ENCODE measurements at regions of chr4 and their contacts with region 1.

Region 1: DNA sequence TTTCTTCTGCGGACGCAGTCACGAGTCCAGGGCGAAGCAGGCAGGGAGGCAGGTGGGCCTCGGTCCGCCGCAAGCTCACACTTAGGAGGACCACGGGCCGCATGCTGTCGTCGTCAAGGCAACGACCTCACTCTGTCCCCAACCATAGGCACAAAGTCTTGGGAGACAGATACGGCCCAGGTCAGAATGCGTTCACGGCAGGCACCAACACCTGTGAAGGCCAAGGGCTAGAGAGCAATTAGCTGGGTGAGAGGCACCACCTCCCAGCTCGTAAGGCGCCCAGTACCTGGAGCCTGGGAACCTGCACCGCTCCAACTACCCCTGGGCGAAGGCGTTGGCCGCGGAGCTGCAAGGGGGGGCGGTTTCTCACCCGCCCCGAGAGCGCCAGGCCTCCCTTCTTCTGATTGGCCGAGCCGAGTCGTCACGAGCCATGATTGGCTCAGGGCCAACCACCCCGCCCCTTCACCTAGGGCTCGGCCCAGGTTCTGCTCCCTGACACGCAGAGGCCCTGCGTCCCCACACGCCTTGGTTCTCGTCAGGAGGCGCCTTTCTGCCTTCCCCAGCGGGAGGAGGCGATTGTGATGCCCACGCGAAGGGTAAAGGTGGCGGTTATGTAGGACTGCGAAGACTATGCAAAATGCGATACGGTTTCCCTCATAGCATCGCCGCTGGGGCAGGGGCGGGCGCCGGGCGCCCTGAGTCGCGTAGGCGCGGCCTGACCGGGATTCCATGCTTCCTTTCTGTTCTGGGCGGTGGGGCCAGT is at the start of gene CDKL2:
- DNase-seq: peak; percentile 93
- ATAC-seq: peak; percentile 100
- H3K4me3 ChIP-seq: peak within 1 kb of the TSS; percentile 45 to 84 (median 68)
- H3K4me3 Mint-ChIP-seq: peak within 1 kb of the TSS; percentile 95
- H3K27ac ChIP-seq: peak within 1 kb of the TSS in 1 of 2 donors; percentile 59
- H3K27ac Mint-ChIP-seq: peak within 1 kb of the TSS; percentile 71
- H3K4me1 ChIP-seq: peaks cover 4 to 14% of the 10 kb centered on the region in 2 donors
- H3K4me1 Mint-ChIP-seq: peaks cover 11% of the 10 kb centered on the region
- H3K27me3 ChIP-seq: no peaks in the 10 kb centered on the region
- H3K27me3 Mint-ChIP-seq: no peaks in the 10 kb centered on the region
- CTCF ChIP-seq: no peak
- total RNA-seq, gene CDKL2: 0.27 and 0.81 TPM in 2 replicates

Region 2: DNA sequence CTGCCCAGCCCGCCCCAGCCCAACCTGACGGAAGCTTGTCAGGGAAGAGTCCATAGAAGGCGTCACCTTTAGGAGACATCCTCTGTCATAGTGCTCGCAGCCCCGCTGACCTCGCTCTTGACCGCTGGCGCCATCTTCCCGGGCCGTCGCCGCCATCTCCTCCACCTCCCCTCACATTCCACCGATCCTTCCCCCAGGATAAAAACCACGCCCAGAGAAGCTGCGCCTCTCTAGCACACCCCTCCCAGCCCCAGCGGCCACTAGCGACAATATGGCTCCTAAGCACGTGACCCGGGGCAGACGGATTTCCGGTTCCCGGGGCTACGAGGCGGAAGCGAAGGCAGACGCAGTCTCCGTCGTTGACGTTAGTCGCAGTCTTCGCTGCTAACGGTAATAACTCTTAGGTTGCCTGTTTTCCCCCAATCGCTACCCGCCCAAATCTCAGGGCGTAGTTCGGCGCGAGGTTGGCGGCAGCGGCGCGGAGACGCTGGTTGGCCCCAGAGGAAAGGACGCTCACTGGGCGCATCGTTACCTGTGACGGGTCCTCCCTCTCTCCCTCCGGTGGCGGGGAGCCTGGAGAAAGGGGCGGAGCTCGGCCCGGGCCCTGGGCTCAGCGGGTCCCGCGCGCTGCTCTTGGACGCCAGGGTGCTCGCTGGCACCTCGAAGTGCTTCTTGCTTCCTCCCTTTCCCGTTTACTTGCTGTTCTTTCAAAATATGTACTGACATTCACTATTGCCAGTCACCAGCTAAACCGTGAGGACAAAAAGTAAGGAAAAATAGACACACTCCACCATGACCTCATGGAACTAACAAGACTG is 116.0 kb before region 1 on chr4 and contains the starts of genes RCHY1 and THAP6:
- CTCF ChIA-PET with region 1: no interaction called
- POLR2A ChIA-PET with region 1: no interaction called
- intact Hi-C with region 1: loop called (anchors 1 kb)
- DNase-seq: peak; percentile 96
- ATAC-seq: peak; percentile 87
- H3K4me3 ChIP-seq: peak within 1 kb of the TSS; percentile 76 to 94 (median 85)
- H3K4me3 Mint-ChIP-seq: no peak within 1 kb of the TSS
- H3K27ac ChIP-seq: peak within 1 kb of the TSS; percentile 93 to 96
- H3K27ac Mint-ChIP-seq: peak within 1 kb of the TSS; percentile 97
- H3K4me1 ChIP-seq: peaks cover 29 to 32% of the 10 kb centered on the region in 2 donors
- H3K4me1 Mint-ChIP-seq: peaks cover 36% of the 10 kb centered on the region
- H3K27me3 ChIP-seq: no peaks in the 10 kb centered on the region
- H3K27me3 Mint-ChIP-seq: no peaks in the 10 kb centered on the region
- CTCF ChIP-seq: peak; percentile 7
- total RNA-seq, gene RCHY1: 33.3 and 34.5 TPM in 2 replicates
- total RNA-seq, gene THAP6: 34.5 and 38.3 TPM in 2 replicates

Region 3: DNA sequence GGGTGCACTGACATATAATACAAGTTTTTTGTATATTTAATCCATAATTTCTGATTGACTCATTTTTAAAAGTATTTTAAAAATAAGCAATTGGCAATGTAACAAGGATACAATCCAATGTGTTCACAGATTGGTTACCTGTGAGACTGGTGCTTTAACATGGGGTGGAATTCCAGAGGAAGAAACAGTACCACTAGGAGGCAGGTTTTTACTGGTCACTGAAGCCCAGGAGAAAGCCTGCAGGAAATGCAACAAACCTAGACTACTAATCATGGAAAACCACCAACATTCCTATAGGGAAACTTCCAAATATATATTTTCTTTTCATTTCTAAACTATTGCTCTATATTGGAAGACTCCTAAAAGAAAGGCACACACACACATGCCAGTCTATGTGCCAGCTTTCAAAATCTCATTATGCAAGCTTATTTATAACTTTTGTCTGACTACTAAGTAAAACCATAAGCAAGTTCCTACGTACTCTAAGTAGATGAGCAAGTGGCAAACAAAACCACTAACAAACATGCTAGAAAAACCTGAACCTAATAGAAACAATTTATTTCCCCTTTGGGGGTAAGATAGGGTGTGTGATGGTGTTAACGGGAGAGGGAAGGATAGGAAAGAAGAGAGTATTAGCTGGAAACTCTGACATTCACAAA is 23.6 kb after region 1 on chr4:
- CTCF ChIA-PET with region 1: no interaction called
- POLR2A ChIA-PET with region 1: interaction called, 3 read pairs
- intact Hi-C with region 1: loop called (anchors 1 kb)
- DNase-seq: peak; percentile 24
- ATAC-seq: no peak
- H3K4me3 ChIP-seq: no peak overlapping the region
- H3K4me3 Mint-ChIP-seq: no peak overlapping the region
- H3K27ac ChIP-seq: no peak overlapping the region
- H3K27ac Mint-ChIP-seq: peak overlapping the region; percentile 74
- H3K4me1 ChIP-seq: no peaks in the 10 kb centered on the region
- H3K4me1 Mint-ChIP-seq: peaks cover 30% of the 10 kb centered on the region
- H3K27me3 ChIP-seq: no peaks in the 10 kb centered on the region
- H3K27me3 Mint-ChIP-seq: no peaks in the 10 kb centered on the region
- CTCF ChIP-seq: peak; percentile 49

Region 4: DNA sequence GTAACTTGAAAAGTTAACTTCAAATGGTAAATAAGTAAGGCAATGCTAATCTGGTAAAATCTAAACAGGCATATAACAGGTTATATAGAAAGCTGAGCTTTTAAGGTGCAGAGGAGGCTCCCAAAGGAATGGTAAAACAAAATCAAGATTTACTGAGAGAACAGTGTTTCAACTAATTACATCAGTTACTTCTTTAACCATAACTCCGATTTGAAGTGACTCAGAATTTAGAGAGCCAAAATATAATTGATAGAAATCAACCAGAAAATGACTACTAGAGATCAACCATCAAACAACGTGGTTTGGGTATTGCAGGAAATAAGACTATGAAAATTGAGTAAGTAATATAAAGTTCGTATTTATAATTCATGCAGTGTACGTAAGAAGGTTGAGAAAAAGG is 35.9 kb after region 1 on chr4:
- CTCF ChIA-PET with region 1: no interaction called
- POLR2A ChIA-PET with region 1: no interaction called
- intact Hi-C with region 1: no loop called
- DNase-seq: no peak
- ATAC-seq: no peak
- H3K4me3 ChIP-seq: no peak overlapping the region
- H3K4me3 Mint-ChIP-seq: no peak overlapping the region
- H3K27ac ChIP-seq: peak overlapping the region in 1 of 2 donors; percentile 18
- H3K27ac Mint-ChIP-seq: no peak overlapping the region
- H3K4me1 ChIP-seq: peaks cover 27 to 37% of the 10 kb centered on the region in 2 donors
- H3K4me1 Mint-ChIP-seq: peaks cover 55% of the 10 kb centered on the region
- H3K27me3 ChIP-seq: no peaks in the 10 kb centered on the region
- H3K27me3 Mint-ChIP-seq: no peaks in the 10 kb centered on the region
- CTCF ChIP-seq: no peak

Region 5: DNA sequence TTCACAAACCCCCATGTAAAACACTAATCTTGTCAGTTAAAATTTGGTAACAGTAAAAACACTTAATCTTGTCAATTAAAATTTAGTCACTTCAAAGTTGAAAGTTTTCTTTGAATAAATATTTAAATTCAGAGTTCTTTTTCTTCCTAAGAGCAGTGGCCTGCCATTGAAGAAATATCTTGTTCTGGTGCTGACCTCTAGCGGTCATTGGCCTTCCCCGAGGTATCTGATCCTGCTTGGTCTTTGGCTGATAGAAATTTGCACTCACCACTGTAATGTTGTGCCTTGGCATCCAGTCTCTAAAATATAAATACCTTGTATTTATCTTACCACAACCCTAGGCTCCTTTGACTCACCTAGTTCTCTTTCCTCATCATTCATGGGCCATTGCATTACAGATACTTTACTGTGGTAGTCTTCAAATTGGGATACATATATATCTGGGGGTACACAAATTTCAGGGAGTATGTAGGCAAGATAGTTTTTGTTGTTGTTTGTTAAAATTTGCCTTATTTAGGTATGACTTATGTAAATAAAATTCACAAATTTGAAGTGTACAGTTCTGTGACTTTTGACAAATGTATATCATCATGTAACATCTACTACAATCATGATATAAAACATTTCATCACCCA is 437.4 kb after region 1 on chr4:
- CTCF ChIA-PET with region 1: no interaction called
- POLR2A ChIA-PET with region 1: no interaction called
- intact Hi-C with region 1: no loop called
- DNase-seq: peak; percentile 83
- ATAC-seq: peak; percentile 82
- H3K4me3 ChIP-seq: no peak overlapping the region
- H3K4me3 Mint-ChIP-seq: no peak overlapping the region
- H3K27ac ChIP-seq: no peak overlapping the region
- H3K27ac Mint-ChIP-seq: no peak overlapping the region
- H3K4me1 ChIP-seq: peaks cover under 1% of the 10 kb centered on the region in 2 donors
- H3K4me1 Mint-ChIP-seq: peaks cover 2% of the 10 kb centered on the region
- H3K27me3 ChIP-seq: no peaks in the 10 kb centered on the region
- H3K27me3 Mint-ChIP-seq: no peaks in the 10 kb centered on the region
- CTCF ChIP-seq: peak; percentile 94